ENCODE measurements at regions of chr11 and their contacts with region 1.

Region 1: GRCh38 chr11:27698872-27699474 is 1.3 kb downstream of the BDNF start:
- DNase-seq: peak; percentile 96
- ATAC-seq: peak; percentile 81
- H3K4me3 Mint-ChIP-seq: peak overlapping the region; percentile 93
- H3K27ac Mint-ChIP-seq: peak overlapping the region; percentile 95
- H3K4me1 Mint-ChIP-seq: peaks cover 66% of the 10 kb centered on the region
- H3K27me3 Mint-ChIP-seq: peaks cover 32% of the 10 kb centered on the region
- CTCF ChIP-seq: peak; percentile 75

Region 2: GRCh38 chr11:27635567-27636037 is 63.4 kb before region 1 on chr11:
- CTCF ChIA-PET with region 1: interaction called, 19 read pairs
- POLR2A ChIA-PET with region 1: interaction called, 7 read pairs
- DNase-seq: no peak
- ATAC-seq: peak; percentile 77
- H3K4me3 Mint-ChIP-seq: peak overlapping the region; percentile 99
- H3K27ac Mint-ChIP-seq: peak overlapping the region; percentile 99
- H3K4me1 Mint-ChIP-seq: peaks cover 49% of the 10 kb centered on the region
- H3K27me3 Mint-ChIP-seq: peaks cover 9% of the 10 kb centered on the region
- CTCF ChIP-seq: no peak

Region 3: DNA sequence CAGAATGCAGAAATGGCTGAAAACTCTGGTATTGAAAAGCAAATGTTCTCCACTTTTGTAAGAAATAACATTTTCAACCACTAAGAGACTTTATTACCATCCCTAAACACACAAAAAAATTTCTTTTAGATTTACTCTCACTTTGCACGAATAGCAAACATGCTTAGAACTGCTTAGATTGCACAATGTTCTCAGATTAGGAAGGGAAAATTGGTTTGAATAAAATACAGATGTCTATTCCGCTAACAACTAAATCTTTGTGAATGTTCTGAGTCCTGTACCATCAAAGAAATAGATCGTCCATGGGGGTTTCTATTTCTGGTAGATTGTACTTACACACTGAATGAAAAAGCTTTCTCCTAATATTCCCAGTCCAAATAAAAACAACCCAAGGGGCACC is 38.8 kb before region 1 on chr11:
- CTCF ChIA-PET with region 1: interaction called, 10 read pairs
- POLR2A ChIA-PET with region 1: interaction called, 4 read pairs
- DNase-seq: no peak
- ATAC-seq: no peak
- H3K4me3 Mint-ChIP-seq: no peak overlapping the region
- H3K27ac Mint-ChIP-seq: no peak overlapping the region
- H3K4me1 Mint-ChIP-seq: peaks cover 31% of the 10 kb centered on the region
- H3K27me3 Mint-ChIP-seq: no peaks in the 10 kb centered on the region
- CTCF ChIP-seq: no peak

Region 4: GRCh38 chr11:27681664-27682063 is 17.3 kb before region 1 on chr11:
- CTCF ChIA-PET with region 1: no interaction called
- POLR2A ChIA-PET with region 1: no interaction called
- DNase-seq: no peak
- ATAC-seq: no peak
- H3K4me3 Mint-ChIP-seq: no peak overlapping the region
- H3K27ac Mint-ChIP-seq: no peak overlapping the region; the same call in 1 of the 2 replicates
- H3K4me1 Mint-ChIP-seq: peaks cover 22% of the 10 kb centered on the region
- H3K27me3 Mint-ChIP-seq: no peaks in the 10 kb centered on the region; the same call in none of the 2 replicates
- CTCF ChIP-seq: no peak

Region 5: DNA sequence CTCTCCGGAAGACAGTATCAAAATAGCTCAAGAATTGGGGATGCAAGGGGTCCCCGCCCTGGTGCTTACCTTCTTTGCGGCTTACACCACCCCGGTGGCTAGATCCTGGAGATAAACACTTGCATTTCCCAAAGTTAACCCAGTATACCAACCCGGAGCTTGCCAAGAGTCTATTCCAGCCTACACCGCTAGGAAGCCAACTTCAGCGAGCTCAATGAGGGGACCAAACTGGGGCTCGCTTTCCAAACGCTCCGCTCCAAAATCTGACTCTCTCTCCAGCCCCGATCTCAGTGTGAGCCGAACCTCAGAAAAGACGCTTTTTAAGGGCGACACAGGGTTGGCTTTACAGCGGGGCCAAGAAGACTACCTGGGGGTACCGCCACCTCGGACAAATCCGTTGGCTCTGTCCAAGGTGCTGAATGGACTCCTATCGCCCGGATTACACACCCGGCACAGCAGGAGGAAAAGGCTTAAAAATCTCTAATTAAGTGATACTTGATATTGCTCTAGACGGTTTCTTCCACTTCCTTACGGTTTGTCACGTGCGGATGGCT is 21.4 kb after region 1 on chr11:
- CTCF ChIA-PET with region 1: interaction called, 184 read pairs
- POLR2A ChIA-PET with region 1: interaction called, 48 read pairs
- DNase-seq: peak; percentile 78
- ATAC-seq: peak; percentile 11
- H3K4me3 Mint-ChIP-seq: peak overlapping the region; percentile 94
- H3K27ac Mint-ChIP-seq: no peak overlapping the region
- H3K4me1 Mint-ChIP-seq: peaks cover 43% of the 10 kb centered on the region
- H3K27me3 Mint-ChIP-seq: peaks cover 53% of the 10 kb centered on the region
- CTCF ChIP-seq: peak; percentile 18; the same call in 1 of the 2 replicates

Region 6: GRCh38 chr11:27926981-27927481 is 228.1 kb after region 1 on chr11:
- CTCF ChIA-PET with region 1: no interaction called
- POLR2A ChIA-PET with region 1: no interaction called
- DNase-seq: no peak
- ATAC-seq: no peak
- H3K4me3 Mint-ChIP-seq: no peak overlapping the region
- H3K27ac Mint-ChIP-seq: no peak overlapping the region
- H3K4me1 Mint-ChIP-seq: no peaks in the 10 kb centered on the region
- H3K27me3 Mint-ChIP-seq: peaks cover 20% of the 10 kb centered on the region
- CTCF ChIP-seq: no peak

Region 7: GRCh38 chr11:28107748-28108618 is 409.0 kb after region 1 on chr11 and contains the starts of genes KIF18A and METTL15:
- CTCF ChIA-PET with region 1: interaction called, 13 read pairs
- POLR2A ChIA-PET with region 1: interaction called, 6 read pairs
- DNase-seq: peak; percentile 100
- ATAC-seq: peak; percentile 92
- H3K4me3 Mint-ChIP-seq: peak within 1 kb of the TSS; percentile 98
- H3K27ac Mint-ChIP-seq: peak within 1 kb of the TSS; percentile 96
- H3K4me1 Mint-ChIP-seq: peaks cover 27% of the 10 kb centered on the region
- H3K27me3 Mint-ChIP-seq: no peaks in the 10 kb centered on the region
- CTCF ChIP-seq: no peak
- total RNA-seq, gene KIF18A: 16.6 to 20.6 TPM (median 18.6 TPM) in 3 replicates
- total RNA-seq, gene METTL15: 13.2 to 16.3 TPM (median 15.8 TPM) in 3 replicates

Region 8: GRCh38 chr11:28674433-28675103 is 975.6 kb after region 1 on chr11:
- CTCF ChIA-PET with region 1: interaction called, 10 read pairs
- POLR2A ChIA-PET with region 1: no interaction called
- DNase-seq: peak; percentile 56
- ATAC-seq: peak; percentile 97
- H3K4me3 Mint-ChIP-seq: no peak overlapping the region
- H3K27ac Mint-ChIP-seq: no peak overlapping the region
- H3K4me1 Mint-ChIP-seq: peaks cover 15% of the 10 kb centered on the region
- H3K27me3 Mint-ChIP-seq: no peaks in the 10 kb centered on the region
- CTCF ChIP-seq: peak; percentile 23; the same call in 1 of the 2 replicates